ENCODE measurements at regions of chr3 and their contacts with region 1.

Region 1: GRCh38 chr3:10224784-10225665 is 23.2 kb upstream of the TATDN2 start:
- DNase-seq: peak; percentile 84
- H3K4me3 Mint-ChIP-seq: peak overlapping the region; percentile 46
- H3K27ac Mint-ChIP-seq: peak overlapping the region; percentile 92
- H3K4me1 Mint-ChIP-seq: peaks cover 75% of the 10 kb centered on the region
- H3K27me3 Mint-ChIP-seq: no peaks in the 10 kb centered on the region

Region 2: DNA sequence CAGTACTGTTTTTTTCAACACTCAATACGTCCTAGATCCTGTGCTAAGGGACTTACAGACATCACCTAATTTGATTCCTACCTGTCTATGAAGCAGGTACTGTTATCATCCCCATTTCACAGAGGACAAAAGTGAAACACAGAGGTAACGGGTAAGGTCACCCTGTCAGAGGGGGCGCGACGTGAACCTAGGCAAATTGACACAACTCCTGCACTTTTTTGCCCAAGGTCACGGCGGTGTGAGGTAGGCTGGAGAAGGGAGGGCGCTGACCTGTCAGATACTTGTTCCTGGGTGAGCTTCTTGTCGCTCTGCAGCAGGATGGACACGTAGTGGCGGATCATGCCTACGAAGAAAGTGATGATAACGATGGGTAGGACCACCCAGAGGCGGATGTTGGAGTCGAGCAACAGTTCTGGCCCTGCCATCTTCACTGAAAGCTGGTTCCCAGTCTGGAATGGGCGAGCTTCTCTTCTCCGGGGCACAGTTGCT is 238.7 kb before region 1 on chr3:
- CTCF ChIA-PET with region 1: no interaction called
- POLR2A ChIA-PET with region 1: no interaction called
- intact Hi-C with region 1: loop called (anchors 10 kb)
- DNase-seq: no peak
- H3K4me3 Mint-ChIP-seq: peak overlapping the region; percentile 89
- H3K27ac Mint-ChIP-seq: peak overlapping the region; percentile 98
- H3K4me1 Mint-ChIP-seq: peaks cover 31% of the 10 kb centered on the region
- H3K27me3 Mint-ChIP-seq: no peaks in the 10 kb centered on the region

Region 3: DNA sequence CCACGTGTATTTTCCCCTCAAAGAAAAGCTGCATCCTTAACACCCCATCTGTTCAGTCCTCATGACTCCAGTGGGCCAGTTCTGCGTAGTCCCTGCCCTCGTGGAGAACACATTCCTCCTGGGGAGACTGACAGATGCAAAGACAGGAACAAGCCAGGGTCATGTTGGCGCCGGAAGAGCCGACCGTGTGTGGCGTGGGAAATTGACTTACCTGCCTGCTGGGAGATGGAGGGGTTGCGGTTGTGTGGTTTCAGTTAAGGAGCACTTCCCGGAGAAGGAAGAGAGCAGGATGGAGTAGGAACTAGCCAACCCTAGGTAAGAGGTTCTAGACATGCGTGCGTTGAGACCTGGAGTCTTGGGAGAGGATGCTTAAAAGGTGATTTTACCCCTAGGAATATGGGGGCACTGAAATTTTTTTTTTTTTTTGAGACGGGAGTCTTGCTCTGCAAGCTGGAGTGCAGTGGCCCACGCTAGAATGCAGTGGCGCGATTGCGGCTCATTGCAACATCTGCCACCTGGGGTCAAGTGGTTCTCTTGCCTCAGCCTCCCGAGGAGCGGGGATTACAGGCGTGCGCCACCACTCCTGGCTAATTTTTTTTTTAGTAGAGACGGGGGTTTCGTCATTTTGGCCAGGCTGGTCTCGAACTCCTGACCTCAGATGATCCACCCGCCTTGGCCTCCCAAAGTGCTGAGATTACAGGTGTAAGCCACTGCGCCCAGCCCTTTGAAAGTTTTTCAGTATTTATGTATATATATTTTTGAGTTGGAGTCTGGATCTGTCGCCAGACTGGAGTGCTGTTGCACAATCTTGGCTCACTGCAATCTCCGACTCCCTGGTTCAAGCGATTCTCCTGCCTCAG is 82.1 kb before region 1 on chr3:
- CTCF ChIA-PET with region 1: interaction called, 4 read pairs
- POLR2A ChIA-PET with region 1: interaction called, 5 read pairs
- intact Hi-C with region 1: loop called (anchors 1 kb)
- DNase-seq: peak; percentile 53
- H3K4me3 Mint-ChIP-seq: peak overlapping the region; percentile 96
- H3K27ac Mint-ChIP-seq: peak overlapping the region; percentile 83
- H3K4me1 Mint-ChIP-seq: peaks cover 27% of the 10 kb centered on the region
- H3K27me3 Mint-ChIP-seq: no peaks in the 10 kb centered on the region

Region 4: GRCh38 chr3:10164546-10165393 is 60.3 kb before region 1 on chr3 and contains the start of gene IRAK2:
- CTCF ChIA-PET with region 1: interaction called, 7 read pairs
- POLR2A ChIA-PET with region 1: no interaction called
- intact Hi-C with region 1: loop called (anchors 1 kb)
- DNase-seq: peak; percentile 76
- H3K4me3 Mint-ChIP-seq: peak within 1 kb of the TSS; percentile 73
- H3K27ac Mint-ChIP-seq: no peak within 1 kb of the TSS
- H3K4me1 Mint-ChIP-seq: peaks cover 17% of the 10 kb centered on the region
- H3K27me3 Mint-ChIP-seq: no peaks in the 10 kb centered on the region
- total RNA-seq, gene IRAK2: 7.3 to 8.3 TPM

Region 5: GRCh38 chr3:10198761-10199649 is 26.0 kb before region 1 on chr3:
- CTCF ChIA-PET with region 1: interaction called, 6 read pairs
- POLR2A ChIA-PET with region 1: interaction called, 10 read pairs
- intact Hi-C with region 1: loop called (anchors 1 kb)
- DNase-seq: peak; percentile 87
- H3K4me3 Mint-ChIP-seq: peak overlapping the region; percentile 27
- H3K27ac Mint-ChIP-seq: peak overlapping the region; percentile 98
- H3K4me1 Mint-ChIP-seq: peaks cover 74% of the 10 kb centered on the region
- H3K27me3 Mint-ChIP-seq: no peaks in the 10 kb centered on the region

Region 6: DNA sequence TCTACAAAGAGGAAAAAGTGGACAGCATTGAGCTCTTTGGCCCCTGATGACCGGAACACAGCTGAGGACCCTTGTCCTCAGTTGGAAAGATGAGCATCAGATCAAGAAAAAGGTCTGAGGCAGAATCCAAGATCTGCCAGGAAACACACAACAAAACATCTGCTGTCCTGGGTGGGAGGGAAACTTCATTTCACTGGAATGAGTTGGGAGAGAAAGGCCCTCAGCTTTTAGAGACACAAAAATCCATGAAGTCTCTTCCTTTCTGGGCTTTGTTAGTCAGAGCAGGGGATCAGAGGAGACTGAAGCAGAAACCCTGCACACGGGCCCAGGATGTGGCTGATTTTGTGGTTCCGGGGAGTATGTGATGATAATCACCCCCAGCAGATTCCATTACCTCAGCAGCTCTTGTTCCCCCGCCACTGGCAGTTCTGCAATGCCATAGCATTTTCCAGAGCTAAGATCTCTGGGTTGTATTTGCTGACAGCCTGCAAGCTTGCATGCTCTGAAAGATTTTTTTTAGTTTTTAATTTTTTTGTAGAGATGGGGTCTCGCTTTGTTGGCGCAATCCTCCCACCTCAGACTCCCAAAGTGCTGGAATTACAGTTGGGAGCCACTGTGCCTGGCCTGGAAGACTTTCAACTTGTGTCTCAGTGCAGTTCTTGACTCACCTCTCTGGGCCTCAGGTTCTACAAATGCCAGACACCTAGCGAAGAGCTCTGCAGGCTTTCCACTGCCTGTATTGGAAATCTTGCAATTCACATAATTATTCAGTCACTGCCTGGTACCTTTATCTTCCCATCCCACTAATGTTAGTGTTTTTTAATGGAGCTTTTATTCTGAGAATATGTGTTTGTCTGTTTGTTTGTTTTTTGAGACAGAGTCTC is 17.4 kb after region 1 on chr3:
- CTCF ChIA-PET with region 1: interaction called, 4 read pairs
- POLR2A ChIA-PET with region 1: interaction called, 15 read pairs
- intact Hi-C with region 1: loop called (anchors 1 kb)
- DNase-seq: peak; percentile 91
- H3K4me3 Mint-ChIP-seq: peak overlapping the region; percentile 36
- H3K27ac Mint-ChIP-seq: peak overlapping the region; percentile 97
- H3K4me1 Mint-ChIP-seq: peaks cover 66% of the 10 kb centered on the region
- H3K27me3 Mint-ChIP-seq: no peaks in the 10 kb centered on the region

Measured in activated CD4-positive, alpha-beta memory T cell treated with anti-CD3 and anti-CD28 coated beads for 36 hours (primary cell).